CD14-positive monocyte (primary cell): ENCODE measurements at regions of chr6 and their contacts with region 1.

Region 1: GRCh38 chr6:43667245-43668150 is 20.1 kb downstream of the MRPS18A start:
- DNase-seq: peak; percentile 57 to 70 (median 69)
- H3K4me3 ChIP-seq: no peak overlapping the region
- H3K4me3 Mint-ChIP-seq: peak overlapping the region in 1 of 2 donors; percentile 46
- H3K27ac ChIP-seq: no peak overlapping the region
- H3K27ac Mint-ChIP-seq: peak overlapping the region in 2 of 7 donors; percentile 30 to 85
- H3K4me1 ChIP-seq: peaks cover 8 to 14% of the 10 kb centered on the region in 2 donors
- H3K4me1 Mint-ChIP-seq: peaks cover 16% of the 10 kb centered on the region
- H3K27me3 ChIP-seq: peaks cover 0 to 3% of the 10 kb centered on the region in 2 donors
- H3K27me3 Mint-ChIP-seq: peaks cover 11 to 17% (median 16%) of the 10 kb centered on the region in 3 donors
- CTCF ChIP-seq: peak; percentile 95

Region 2: GRCh38 chr6:43762966-43763695 is 95.6 kb after region 1 on chr6:
- intact Hi-C with region 1: loop called in 1 of 2 experiments (anchors 5 kb)
- DNase-seq: peak; percentile 64 to 85 (median 75)
- H3K4me3 ChIP-seq: peak overlapping the region in 1 of 3 experiments; percentile 2
- H3K4me3 Mint-ChIP-seq: peak overlapping the region in 1 of 2 donors; percentile 65
- H3K27ac ChIP-seq: peak overlapping the region; percentile 34 to 47
- H3K27ac Mint-ChIP-seq: peak overlapping the region; percentile 41 to 83 (median 60)
- H3K4me1 ChIP-seq: peaks cover 15 to 17% of the 10 kb centered on the region in 2 donors
- H3K4me1 Mint-ChIP-seq: peaks cover 22% of the 10 kb centered on the region
- H3K27me3 ChIP-seq: peaks cover 0 to 8% of the 10 kb centered on the region in 2 donors
- H3K27me3 Mint-ChIP-seq: peaks cover 19 to 29% (median 28%) of the 10 kb centered on the region in 3 donors
- CTCF ChIP-seq: no peak

Region 3: GRCh38 chr6:43817192-43817591 is 149.7 kb after region 1 on chr6:
- intact Hi-C with region 1: loop called in 1 of 2 experiments (anchors 5 kb)
- DNase-seq: peak; percentile 59 to 79 (median 73)
- H3K4me3 ChIP-seq: no peak overlapping the region
- H3K4me3 Mint-ChIP-seq: peak overlapping the region in 1 of 2 donors; percentile 32
- H3K27ac ChIP-seq: no peak overlapping the region
- H3K27ac Mint-ChIP-seq: peak overlapping the region in 4 of 7 donors; percentile 59 to 86 (median 69)
- H3K4me1 ChIP-seq: peaks cover 23 to 28% of the 10 kb centered on the region in 2 donors
- H3K4me1 Mint-ChIP-seq: peaks cover 40% of the 10 kb centered on the region
- H3K27me3 ChIP-seq: no peaks in the 10 kb centered on the region
- H3K27me3 Mint-ChIP-seq: peaks cover 0 to 3% (median 1%) of the 10 kb centered on the region in 3 donors
- CTCF ChIP-seq: peak; percentile 72

Region 4: DNA sequence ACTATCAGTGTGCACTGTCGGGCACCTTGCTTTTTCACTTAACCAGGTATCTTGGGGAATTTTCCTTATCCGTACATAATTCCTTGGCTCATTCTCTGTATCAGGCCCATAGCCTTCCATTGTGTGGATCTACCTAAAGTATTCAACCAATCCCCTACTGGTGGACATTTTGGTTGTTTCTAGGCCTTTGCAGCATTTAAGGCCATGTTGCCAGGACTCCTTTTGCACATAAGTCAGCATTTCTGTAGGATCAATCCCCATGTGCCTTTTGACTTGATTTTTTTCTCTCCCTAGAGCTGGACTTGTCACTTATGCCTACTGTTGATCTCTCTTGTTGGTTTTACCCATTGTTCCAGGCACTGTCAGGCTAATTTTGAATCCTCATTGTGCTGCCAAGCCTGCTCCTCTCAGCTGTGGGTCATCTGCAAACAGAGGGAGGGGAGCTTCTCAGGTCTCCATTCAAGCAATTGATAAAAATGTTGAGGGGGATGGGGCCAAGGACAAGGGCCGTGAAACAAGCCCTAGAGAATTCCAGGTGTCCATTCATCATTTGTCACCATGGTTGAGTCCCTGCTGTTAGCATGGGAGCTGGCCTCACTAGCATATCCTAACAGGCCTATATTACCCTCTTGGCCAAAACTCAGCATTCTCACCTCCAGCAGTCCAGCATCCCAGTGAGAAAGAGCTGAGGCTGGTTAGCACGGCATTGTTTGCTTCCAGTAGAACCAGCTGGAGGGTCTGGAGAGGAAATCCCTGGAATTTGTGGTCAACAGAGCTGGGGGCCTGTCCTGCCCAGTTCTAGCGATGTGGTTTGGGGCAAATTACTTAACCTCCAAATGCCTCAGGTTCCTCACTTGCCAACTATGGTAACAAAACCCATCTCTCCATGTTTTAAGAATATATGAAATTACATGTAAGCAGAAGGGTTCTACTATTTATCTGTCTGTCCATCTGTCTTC is 281.3 kb after region 1 on chr6:
- intact Hi-C with region 1: loop called in 1 of 2 experiments (anchors 5 kb)
- DNase-seq: no peak
- H3K4me3 ChIP-seq: no peak overlapping the region
- H3K4me3 Mint-ChIP-seq: no peak overlapping the region
- H3K27ac ChIP-seq: no peak overlapping the region
- H3K27ac Mint-ChIP-seq: no peak overlapping the region
- H3K4me1 ChIP-seq: no peaks in the 10 kb centered on the region
- H3K4me1 Mint-ChIP-seq: peaks cover 4% of the 10 kb centered on the region
- H3K27me3 ChIP-seq: no peaks in the 10 kb centered on the region
- H3K27me3 Mint-ChIP-seq: peaks cover 1 to 4% (median 3%) of the 10 kb centered on the region in 3 donors
- CTCF ChIP-seq: no peak